Activated B cell treated with CpG ODN at 0.5 μM for 24 hours (primary cell): ENCODE measurements at regions of chr1 and their contacts with region 1.

Region 1: GRCh38 chr1:50873458-50874187 is 86.4 kb downstream of the FAF1 start:
- DNase-seq: peak; percentile 46
- ATAC-seq: peak; percentile 89
- H3K4me3 Mint-ChIP-seq: peak overlapping the region; percentile 73
- H3K27ac Mint-ChIP-seq: peak overlapping the region; percentile 32
- H3K4me1 Mint-ChIP-seq: peaks cover 16% of the 10 kb centered on the region
- H3K27me3 Mint-ChIP-seq: no peaks in the 10 kb centered on the region
- CTCF ChIP-seq: peak; percentile 87

Region 2: GRCh38 chr1:50591598-50591997 is 282.0 kb before region 1 on chr1:
- CTCF ChIA-PET with region 1: no interaction called
- POLR2A ChIA-PET with region 1: no interaction called
- intact Hi-C with region 1: no loop called
- DNase-seq: no peak
- ATAC-seq: no peak
- H3K4me3 Mint-ChIP-seq: no peak overlapping the region
- H3K27ac Mint-ChIP-seq: no peak overlapping the region
- H3K4me1 Mint-ChIP-seq: no peaks in the 10 kb centered on the region
- H3K27me3 Mint-ChIP-seq: no peaks in the 10 kb centered on the region
- CTCF ChIP-seq: no peak

Region 3: GRCh38 chr1:50929376-50929958 is 55.8 kb after region 1 on chr1:
- CTCF ChIA-PET with region 1: interaction called, 24 read pairs
- POLR2A ChIA-PET with region 1: no interaction called
- intact Hi-C with region 1: loop called (anchors 1 kb)
- DNase-seq: no peak
- ATAC-seq: no peak
- H3K4me3 Mint-ChIP-seq: no peak overlapping the region
- H3K27ac Mint-ChIP-seq: no peak overlapping the region
- H3K4me1 Mint-ChIP-seq: peaks cover 34% of the 10 kb centered on the region
- H3K27me3 Mint-ChIP-seq: no peaks in the 10 kb centered on the region
- CTCF ChIP-seq: no peak

Region 4: GRCh38 chr1:51044834-51045233 is 171.2 kb after region 1 on chr1:
- CTCF ChIA-PET with region 1: interaction called, 6 read pairs
- POLR2A ChIA-PET with region 1: no interaction called
- intact Hi-C with region 1: loop called (anchors 1 kb)
- DNase-seq: no peak
- ATAC-seq: no peak
- H3K4me3 Mint-ChIP-seq: no peak overlapping the region
- H3K27ac Mint-ChIP-seq: no peak overlapping the region
- H3K4me1 Mint-ChIP-seq: no peaks in the 10 kb centered on the region
- H3K27me3 Mint-ChIP-seq: peaks cover 12% of the 10 kb centered on the region
- CTCF ChIP-seq: no peak

Region 5: DNA sequence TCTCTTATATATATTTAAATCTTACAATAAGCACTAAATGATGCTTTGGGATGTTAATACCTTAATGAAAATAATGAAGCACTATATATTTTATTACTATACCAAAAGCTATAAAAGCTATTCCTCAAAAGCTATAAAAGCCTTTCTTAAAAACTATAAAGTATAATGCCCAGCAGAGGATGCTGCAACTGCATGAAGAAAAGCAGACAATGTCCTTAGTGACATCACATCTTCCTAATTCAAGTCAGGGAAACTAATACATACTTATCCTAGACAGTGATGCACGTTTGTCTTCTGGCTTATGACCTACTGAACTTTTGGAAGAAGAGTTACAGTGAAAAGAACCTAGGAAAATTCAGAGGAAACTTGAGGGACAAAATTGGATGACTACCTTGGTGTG is 214.9 kb after region 1 on chr1:
- CTCF ChIA-PET with region 1: no interaction called
- POLR2A ChIA-PET with region 1: no interaction called
- intact Hi-C with region 1: no loop called
- DNase-seq: no peak
- ATAC-seq: no peak
- H3K4me3 Mint-ChIP-seq: no peak overlapping the region
- H3K27ac Mint-ChIP-seq: no peak overlapping the region
- H3K4me1 Mint-ChIP-seq: no peaks in the 10 kb centered on the region
- H3K27me3 Mint-ChIP-seq: peaks cover 26% of the 10 kb centered on the region
- CTCF ChIP-seq: no peak

Region 6: GRCh38 chr1:51131185-51131584 is 257.6 kb after region 1 on chr1:
- CTCF ChIA-PET with region 1: no interaction called
- POLR2A ChIA-PET with region 1: no interaction called
- intact Hi-C with region 1: no loop called
- DNase-seq: no peak
- ATAC-seq: no peak
- H3K4me3 Mint-ChIP-seq: no peak overlapping the region
- H3K27ac Mint-ChIP-seq: no peak overlapping the region
- H3K4me1 Mint-ChIP-seq: no peaks in the 10 kb centered on the region
- H3K27me3 Mint-ChIP-seq: peaks cover 31% of the 10 kb centered on the region
- CTCF ChIP-seq: no peak

Region 7: GRCh38 chr1:51192213-51192843 is 318.7 kb after region 1 on chr1:
- CTCF ChIA-PET with region 1: interaction called, 106 read pairs
- POLR2A ChIA-PET with region 1: interaction called, 3 read pairs
- intact Hi-C with region 1: loop called (anchors 1 kb)
- DNase-seq: peak; percentile 16
- ATAC-seq: peak; percentile 42
- H3K4me3 Mint-ChIP-seq: no peak overlapping the region
- H3K27ac Mint-ChIP-seq: no peak overlapping the region
- H3K4me1 Mint-ChIP-seq: no peaks in the 10 kb centered on the region
- H3K27me3 Mint-ChIP-seq: peaks cover 7% of the 10 kb centered on the region
- CTCF ChIP-seq: peak; percentile 66